ENCODE measurements at regions of chr2 and their contacts with region 1.

Region 1: DNA sequence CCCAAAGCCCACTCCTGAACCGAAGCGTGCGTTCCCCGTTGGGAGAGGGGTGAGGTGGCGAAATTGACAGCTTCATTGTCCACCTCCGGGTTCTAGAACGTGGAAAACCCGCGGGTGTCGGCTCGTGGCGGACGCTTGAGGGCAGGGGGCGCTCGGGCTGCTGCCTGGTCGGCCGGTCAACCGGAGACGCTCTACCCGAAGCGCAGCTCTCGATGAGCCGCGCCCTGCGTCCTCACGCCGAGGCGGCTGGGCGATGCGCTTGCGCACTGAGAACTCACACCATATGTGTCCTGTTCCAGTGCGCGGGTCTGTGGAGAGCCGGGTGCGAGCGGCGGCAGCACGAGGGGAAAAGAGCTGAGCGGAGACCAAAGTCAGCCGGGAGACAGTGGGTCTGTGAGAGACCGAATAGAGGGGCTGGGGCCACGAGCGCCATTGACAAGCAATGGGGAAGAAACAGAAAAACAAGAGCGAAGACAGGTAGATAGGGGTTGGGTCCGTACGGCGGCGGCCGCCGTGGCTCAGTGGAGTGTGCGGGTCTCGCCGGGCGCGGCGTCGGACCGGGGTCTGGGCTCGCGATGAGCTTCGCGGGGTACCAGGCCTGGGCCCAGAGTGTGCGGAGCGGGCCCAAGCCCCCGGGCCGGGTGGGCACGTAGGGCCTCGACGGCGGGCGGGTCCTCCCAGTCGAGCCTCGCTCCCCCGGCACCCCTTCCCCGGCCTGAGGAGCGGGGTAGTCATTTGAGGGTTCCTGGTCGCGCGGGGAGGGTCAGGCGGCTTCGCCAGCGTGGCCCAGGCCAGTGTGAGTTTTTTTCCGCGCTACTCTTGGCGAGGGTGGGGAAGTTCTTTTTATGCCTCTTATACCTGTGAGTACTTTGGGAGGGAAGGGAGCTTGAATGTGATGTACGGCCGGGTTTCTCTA is at the start of gene EIF5B:
- DNase-seq: peak; percentile 96
- ATAC-seq: peak; percentile 92
- H3K4me3 ChIP-seq: peak within 1 kb of the TSS; percentile 88 to 98 (median 94)
- H3K27ac ChIP-seq: peak within 1 kb of the TSS; percentile 88
- H3K4me1 ChIP-seq: peaks cover 64% of the 10 kb centered on the region
- H3K27me3 ChIP-seq: no peaks in the 10 kb centered on the region; a peak in 1 of 5 replicates
- CTCF ChIP-seq: peak; percentile 98
- EP300 ChIP-seq: peak in 1 of 2 experiments; percentile 41; a peak in 1 of 4 replicates
- POLR2A ChIP-seq: peak; percentile 86 to 93
- RAD21 ChIP-seq: peak; percentile 50
- total RNA-seq, gene EIF5B: 32.1 and 66.4 TPM in 2 replicates

Region 2: DNA sequence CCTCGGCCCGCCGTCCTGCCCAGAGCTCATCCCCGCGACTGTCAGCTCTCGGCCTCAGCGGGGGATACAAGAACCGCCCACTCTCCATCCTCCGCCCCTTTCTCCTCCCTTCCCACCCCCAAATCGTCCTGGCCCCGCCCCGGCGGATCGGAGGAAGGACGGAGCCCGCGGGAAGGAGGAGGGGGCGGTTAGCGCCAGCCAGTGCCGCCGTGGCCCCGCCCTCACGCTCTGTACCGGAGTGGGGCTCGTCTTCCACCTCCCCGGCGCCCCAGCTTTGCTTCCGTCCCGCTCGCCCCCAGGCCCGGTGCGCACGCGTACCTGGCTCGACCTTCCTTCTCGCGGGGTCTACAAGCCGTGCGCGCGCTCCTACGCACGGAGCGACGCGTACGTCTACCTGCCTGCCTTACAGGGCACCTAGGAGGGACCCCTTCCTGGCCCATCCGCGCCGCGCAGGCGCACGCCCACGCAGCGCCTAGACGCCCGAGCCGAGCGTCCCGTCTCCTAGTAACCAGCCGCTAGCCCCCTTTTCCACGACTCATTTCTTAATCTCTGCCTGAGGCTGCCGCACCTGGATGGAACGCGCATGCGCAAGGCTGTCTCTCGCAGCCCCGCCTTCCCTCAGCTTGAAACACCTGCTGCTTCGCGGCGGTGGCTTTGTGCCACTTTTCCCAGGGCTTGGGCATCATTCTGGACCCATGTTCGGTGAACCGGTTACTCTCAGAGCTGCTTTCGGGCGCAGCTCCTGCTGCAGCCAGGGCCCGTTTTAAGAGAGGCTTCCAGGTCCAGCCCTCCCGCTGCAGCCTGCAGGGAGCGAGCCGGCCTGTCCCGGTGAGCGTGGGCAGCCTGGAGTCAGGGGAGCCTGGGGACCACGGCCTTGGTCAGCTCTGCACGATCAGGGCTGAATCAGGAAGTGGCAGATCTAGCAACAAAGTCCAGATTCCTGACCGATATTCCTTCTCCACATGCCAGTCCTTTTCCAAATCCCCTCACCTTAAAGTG is 196.0 kb before region 1 on chr2 and contains the start of gene C2orf15:
- CTCF ChIA-PET with region 1: no interaction called
- POLR2A ChIA-PET with region 1: interaction called, 36 read pairs
- in situ Hi-C with region 1: no loop called
- intact Hi-C with region 1: loop called (anchors 2 kb)
- DNase-seq: peak; percentile 94
- ATAC-seq: peak; percentile 93
- H3K4me3 ChIP-seq: peak within 1 kb of the TSS; percentile 75 to 92 (median 85)
- H3K27ac ChIP-seq: peak within 1 kb of the TSS; percentile 74
- H3K4me1 ChIP-seq: peaks cover 28% of the 10 kb centered on the region
- H3K27me3 ChIP-seq: no peaks in the 10 kb centered on the region
- CTCF ChIP-seq: no peak; the same call in 1 of the 2 replicates
- EP300 ChIP-seq: 0 out of 4 replicates have a peak, but pooled peaks of 1 of the 2 experiments have one; percentile 1
- POLR2A ChIP-seq: peak; percentile 89 to 99
- RAD21 ChIP-seq: no peak
- total RNA-seq, gene C2orf15: 8.3 and 12.2 TPM in 2 replicates

Region 3: GRCh38 chr2:99180755-99181623 is 156.4 kb before region 1 on chr2 and contains the starts of genes MITD1 and MRPL30:
- CTCF ChIA-PET with region 1: no interaction called
- POLR2A ChIA-PET with region 1: interaction called, 103 read pairs
- in situ Hi-C with region 1: loop called (anchors 5 kb)
- intact Hi-C with region 1: loop called (anchors 1 kb)
- DNase-seq: peak; percentile 97
- ATAC-seq: peak; percentile 91
- H3K4me3 ChIP-seq: peak within 1 kb of the TSS; percentile 68 to 84 (median 84)
- H3K27ac ChIP-seq: peak within 1 kb of the TSS; percentile 83
- H3K4me1 ChIP-seq: peaks cover 46% of the 10 kb centered on the region
- H3K27me3 ChIP-seq: no peaks in the 10 kb centered on the region; a peak in 1 of 5 replicates
- CTCF ChIP-seq: peak; percentile 33; the same call in 1 of the 2 replicates
- EP300 ChIP-seq: peak; percentile 47 to 72
- POLR2A ChIP-seq: peak; percentile 95 to 99
- RAD21 ChIP-seq: no peak; the same call in none of the 2 replicates
- total RNA-seq, gene MITD1: 43.7 and 48.7 TPM in 2 replicates
- total RNA-seq, gene MRPL30: 75.3 and 118 TPM in 2 replicates

Region 4: GRCh38 chr2:99348173-99348572 is 10.8 kb after region 1 on chr2:
- CTCF ChIA-PET with region 1: no interaction called
- POLR2A ChIA-PET with region 1: interaction called, 16 read pairs
- in situ Hi-C with region 1: no loop called
- intact Hi-C with region 1: no loop called
- DNase-seq: no peak
- ATAC-seq: no peak
- H3K4me3 ChIP-seq: no peak overlapping the region
- H3K27ac ChIP-seq: no peak overlapping the region
- H3K4me1 ChIP-seq: no peaks in the 10 kb centered on the region
- H3K27me3 ChIP-seq: no peaks in the 10 kb centered on the region
- CTCF ChIP-seq: no peak
- EP300 ChIP-seq: no peak
- POLR2A ChIP-seq: no peak
- RAD21 ChIP-seq: no peak

Region 5: DNA sequence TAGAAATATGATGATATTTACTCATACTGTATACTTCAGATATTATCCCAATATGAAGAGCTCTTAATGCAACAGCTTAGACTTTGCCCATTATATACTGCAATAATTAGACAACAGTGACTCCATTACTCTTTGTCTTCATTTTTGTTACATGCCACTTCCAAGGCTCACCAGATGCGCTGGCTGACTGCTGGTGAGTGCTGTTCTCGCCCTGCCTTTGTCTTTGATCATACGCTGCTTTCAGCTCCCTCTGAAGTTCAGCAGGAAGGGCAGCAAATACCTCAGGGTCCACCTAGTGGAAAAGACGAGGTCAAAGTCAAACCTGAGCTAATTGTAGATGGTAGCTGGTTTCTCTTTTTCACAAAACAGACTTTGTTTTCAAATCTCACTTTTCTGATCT is 66.2 kb after region 1 on chr2:
- CTCF ChIA-PET with region 1: no interaction called
- POLR2A ChIA-PET with region 1: interaction called, 24 read pairs
- in situ Hi-C with region 1: no loop called
- intact Hi-C with region 1: loop called (anchors 1 kb)
- DNase-seq: peak; percentile 88
- ATAC-seq: peak; percentile 95
- H3K4me3 ChIP-seq: no peak overlapping the region
- H3K27ac ChIP-seq: peak overlapping the region; percentile 70
- H3K4me1 ChIP-seq: peaks cover 30% of the 10 kb centered on the region
- H3K27me3 ChIP-seq: no peaks in the 10 kb centered on the region
- CTCF ChIP-seq: peak; percentile 82
- EP300 ChIP-seq: 0 out of 4 replicates have a peak, but pooled peaks of 1 of the 2 experiments have one; percentile 19
- POLR2A ChIP-seq: 0 out of 4 replicates have a peak, but pooled peaks of 1 of the 2 experiments have one; percentile 15
- RAD21 ChIP-seq: peak; percentile 72

Region 6: GRCh38 chr2:99602475-99602874 is 265.1 kb after region 1 on chr2:
- CTCF ChIA-PET with region 1: no interaction called
- POLR2A ChIA-PET with region 1: no interaction called
- in situ Hi-C with region 1: no loop called
- intact Hi-C with region 1: no loop called
- DNase-seq: no peak
- ATAC-seq: no peak
- H3K4me3 ChIP-seq: no peak overlapping the region
- H3K27ac ChIP-seq: no peak overlapping the region
- H3K4me1 ChIP-seq: no peaks in the 10 kb centered on the region
- H3K27me3 ChIP-seq: peaks cover 0 to 21% of the 10 kb centered on the region in 2 experiments; a peak in 1 of 5 replicates
- CTCF ChIP-seq: no peak
- EP300 ChIP-seq: no peak
- POLR2A ChIP-seq: no peak
- RAD21 ChIP-seq: no peak

Measured in HepG2 (cell line).